Activated naive CD4-positive, alpha-beta T cell treated with anti-CD3 and anti-CD28 coated beads for 36 hours (primary cell): ENCODE measurements at regions of chr16 and their contacts with region 1.

Region 1: DNA sequence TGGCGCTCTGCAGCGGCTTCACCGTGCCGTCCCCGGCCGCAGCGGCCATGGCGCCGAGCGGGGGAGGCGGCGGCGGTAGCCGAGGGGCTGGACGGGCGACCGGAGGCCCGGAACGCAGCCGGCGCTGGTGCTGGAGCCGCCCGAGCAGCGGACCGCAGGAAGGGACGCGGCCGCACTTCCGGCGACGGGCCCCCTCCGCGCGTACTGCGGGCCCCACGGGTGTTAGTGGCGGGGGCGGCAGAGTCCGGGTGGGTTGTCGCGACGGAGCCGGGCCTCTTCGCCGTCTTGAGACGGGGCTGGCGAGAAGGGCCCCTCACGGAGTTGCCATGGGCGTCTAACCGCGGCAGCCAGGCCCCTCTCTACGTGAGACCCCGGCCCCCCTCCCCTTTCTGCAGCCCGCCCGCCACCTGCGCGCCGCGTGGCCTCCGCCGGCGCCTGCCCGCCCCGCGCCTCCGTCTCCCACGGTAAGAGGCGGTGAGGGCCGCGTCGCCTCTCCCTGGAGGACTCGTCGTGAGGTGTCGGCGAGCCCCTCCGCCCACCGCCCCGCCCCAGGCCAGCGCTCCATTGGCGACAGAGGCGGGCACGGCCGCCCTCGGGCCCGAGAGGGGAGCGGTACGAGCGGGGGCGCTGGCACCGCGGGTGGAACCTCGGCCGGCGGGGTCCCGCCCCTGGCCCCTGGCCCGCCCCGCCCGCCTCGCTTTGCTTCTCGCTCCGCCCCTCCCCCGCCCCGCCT is at the starts of genes VPS9D1 and ZNF276:
- DNase-seq: peak; percentile 84
- H3K4me3 Mint-ChIP-seq: peak within 1 kb of the TSS; percentile 77
- H3K27ac Mint-ChIP-seq: peak within 1 kb of the TSS; percentile 85
- H3K4me1 Mint-ChIP-seq: peaks cover 43% of the 10 kb centered on the region
- H3K27me3 Mint-ChIP-seq: no peaks in the 10 kb centered on the region
- total RNA-seq, gene VPS9D1: 0.91 to 1.4 TPM
- total RNA-seq, gene ZNF276: 19.8 to 25.3 TPM

Region 2: GRCh38 chr16:89670496-89671431 is 50.2 kb before region 1 on chr16:
- CTCF ChIA-PET with region 1: no interaction called
- intact Hi-C with region 1: no loop called
- DNase-seq: no peak
- H3K4me3 Mint-ChIP-seq: no peak overlapping the region
- H3K27ac Mint-ChIP-seq: peak overlapping the region; percentile 7
- H3K4me1 Mint-ChIP-seq: peaks cover 23% of the 10 kb centered on the region
- H3K27me3 Mint-ChIP-seq: no peaks in the 10 kb centered on the region

Region 3: GRCh38 chr16:89737341-89738071 is 16.5 kb after region 1 on chr16:
- CTCF ChIA-PET with region 1: no interaction called
- intact Hi-C with region 1: loop called (anchors 2 kb)
- DNase-seq: peak; percentile 64
- H3K4me3 Mint-ChIP-seq: no peak overlapping the region
- H3K27ac Mint-ChIP-seq: peak overlapping the region; percentile 78
- H3K4me1 Mint-ChIP-seq: peaks cover 22% of the 10 kb centered on the region
- H3K27me3 Mint-ChIP-seq: no peaks in the 10 kb centered on the region

Region 4: GRCh38 chr16:89779231-89779908 is 58.4 kb after region 1 on chr16:
- CTCF ChIA-PET with region 1: no interaction called
- intact Hi-C with region 1: no loop called
- DNase-seq: no peak
- H3K4me3 Mint-ChIP-seq: no peak overlapping the region
- H3K27ac Mint-ChIP-seq: no peak overlapping the region
- H3K4me1 Mint-ChIP-seq: peaks cover under 1% of the 10 kb centered on the region
- H3K27me3 Mint-ChIP-seq: no peaks in the 10 kb centered on the region